ENCODE measurements at regions of chr3 and their contacts with region 1.

Region 1: DNA sequence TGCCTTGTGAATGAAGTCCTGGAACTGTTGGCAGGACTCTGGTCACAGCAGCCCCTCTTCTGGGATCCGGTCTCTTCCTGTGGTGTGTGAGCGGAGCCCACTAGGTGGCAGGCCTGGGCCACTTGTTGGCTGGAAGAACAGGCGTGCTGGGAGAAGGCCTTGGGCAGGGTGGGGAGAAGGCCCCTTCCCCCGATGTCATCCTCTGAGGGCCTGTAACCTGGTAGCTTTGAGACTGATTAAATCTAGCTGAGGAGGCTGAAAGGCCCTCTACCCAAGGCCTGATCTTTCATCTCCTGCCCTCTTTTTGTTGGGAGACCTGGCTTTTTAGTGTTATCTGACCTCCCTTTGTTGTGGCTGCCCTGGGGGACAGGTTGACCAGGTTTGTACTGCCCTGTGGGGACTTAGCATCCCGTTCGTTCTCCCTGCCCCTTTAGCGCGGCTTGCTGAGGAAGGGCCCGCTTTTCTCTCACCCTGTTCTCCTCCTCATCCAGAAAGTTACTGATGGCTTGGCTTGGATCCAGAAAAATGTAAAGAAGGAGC is 48.3 kb downstream of the CHCHD6 start:
- DNase-seq: peak; percentile 78
- ATAC-seq: peak; percentile 89
- H3K4me3 ChIP-seq: no peak overlapping the region
- H3K27ac ChIP-seq: peak overlapping the region; percentile 10; the same call in 1 of the 2 replicates
- H3K4me1 ChIP-seq: peaks cover 17% of the 10 kb centered on the region
- H3K27me3 ChIP-seq: no peaks in the 10 kb centered on the region
- CTCF ChIP-seq: peak; percentile 97
- POLR2A ChIP-seq: no peak
- RAD21 ChIP-seq: peak; percentile 98

Region 2: DNA sequence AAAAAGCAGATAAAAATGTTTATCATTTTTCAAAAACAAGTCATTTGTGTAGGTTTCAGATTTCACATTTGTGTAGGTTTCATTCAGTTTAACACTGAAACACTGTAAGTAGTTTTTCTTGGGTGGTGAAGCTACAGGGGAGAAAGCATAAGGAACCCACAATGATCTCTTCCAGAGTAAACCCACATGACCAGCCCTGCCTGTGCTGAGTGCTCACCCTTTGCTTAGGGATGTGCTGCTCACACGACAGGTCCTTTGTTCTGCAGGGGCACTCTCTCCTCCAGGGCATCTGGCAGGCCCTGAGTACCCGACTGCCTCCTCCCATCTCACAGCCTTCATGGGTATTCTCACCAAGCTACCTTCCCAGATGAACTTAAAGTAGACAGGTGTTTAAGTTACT is 305.6 kb before region 1 on chr3:
- CTCF ChIA-PET with region 1: no interaction called
- POLR2A ChIA-PET with region 1: no interaction called
- dilution Hi-C with region 1: no loop called
- in situ Hi-C with region 1: no loop called
- intact Hi-C with region 1: no loop called
- DNase-seq: peak; percentile 51
- ATAC-seq: peak; percentile 77
- H3K4me3 ChIP-seq: no peak overlapping the region
- H3K27ac ChIP-seq: no peak overlapping the region
- H3K4me1 ChIP-seq: peaks cover 9% of the 10 kb centered on the region
- H3K27me3 ChIP-seq: no peaks in the 10 kb centered on the region
- CTCF ChIP-seq: no peak
- POLR2A ChIP-seq: no peak
- RAD21 ChIP-seq: no peak

Region 3: DNA sequence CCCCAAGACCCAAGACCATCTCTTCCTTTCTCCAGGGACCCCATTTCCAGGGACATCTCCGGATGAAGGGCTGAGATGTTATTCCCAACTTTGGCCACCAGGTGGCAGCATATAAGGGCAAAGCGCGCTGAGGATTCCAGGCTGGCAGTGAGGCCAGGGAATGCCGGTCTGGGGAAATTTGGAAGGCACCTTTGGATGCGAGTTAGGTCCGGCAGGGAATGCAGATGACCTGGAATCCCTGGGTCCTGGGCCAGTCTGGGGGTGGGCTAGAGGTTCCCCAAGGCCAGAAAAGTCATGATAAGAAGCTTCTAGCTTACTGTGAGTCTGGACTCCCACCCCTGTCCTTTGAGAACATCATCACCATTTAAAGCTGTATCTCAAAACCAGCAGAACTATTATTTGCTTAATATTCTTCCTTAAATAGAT is 230.0 kb before region 1 on chr3:
- CTCF ChIA-PET with region 1: no interaction called
- POLR2A ChIA-PET with region 1: no interaction called
- dilution Hi-C with region 1: no loop called
- in situ Hi-C with region 1: no loop called
- intact Hi-C with region 1: loop called (anchors 5 kb)
- DNase-seq: peak; percentile 33
- ATAC-seq: peak; percentile 72
- H3K4me3 ChIP-seq: no peak overlapping the region
- H3K27ac ChIP-seq: no peak overlapping the region
- H3K4me1 ChIP-seq: no peaks in the 10 kb centered on the region; the same call in 1 of the 2 replicates
- H3K27me3 ChIP-seq: peaks cover 45% of the 10 kb centered on the region
- CTCF ChIP-seq: peak; percentile 78
- POLR2A ChIP-seq: no peak
- RAD21 ChIP-seq: peak; percentile 78

Region 4: DNA sequence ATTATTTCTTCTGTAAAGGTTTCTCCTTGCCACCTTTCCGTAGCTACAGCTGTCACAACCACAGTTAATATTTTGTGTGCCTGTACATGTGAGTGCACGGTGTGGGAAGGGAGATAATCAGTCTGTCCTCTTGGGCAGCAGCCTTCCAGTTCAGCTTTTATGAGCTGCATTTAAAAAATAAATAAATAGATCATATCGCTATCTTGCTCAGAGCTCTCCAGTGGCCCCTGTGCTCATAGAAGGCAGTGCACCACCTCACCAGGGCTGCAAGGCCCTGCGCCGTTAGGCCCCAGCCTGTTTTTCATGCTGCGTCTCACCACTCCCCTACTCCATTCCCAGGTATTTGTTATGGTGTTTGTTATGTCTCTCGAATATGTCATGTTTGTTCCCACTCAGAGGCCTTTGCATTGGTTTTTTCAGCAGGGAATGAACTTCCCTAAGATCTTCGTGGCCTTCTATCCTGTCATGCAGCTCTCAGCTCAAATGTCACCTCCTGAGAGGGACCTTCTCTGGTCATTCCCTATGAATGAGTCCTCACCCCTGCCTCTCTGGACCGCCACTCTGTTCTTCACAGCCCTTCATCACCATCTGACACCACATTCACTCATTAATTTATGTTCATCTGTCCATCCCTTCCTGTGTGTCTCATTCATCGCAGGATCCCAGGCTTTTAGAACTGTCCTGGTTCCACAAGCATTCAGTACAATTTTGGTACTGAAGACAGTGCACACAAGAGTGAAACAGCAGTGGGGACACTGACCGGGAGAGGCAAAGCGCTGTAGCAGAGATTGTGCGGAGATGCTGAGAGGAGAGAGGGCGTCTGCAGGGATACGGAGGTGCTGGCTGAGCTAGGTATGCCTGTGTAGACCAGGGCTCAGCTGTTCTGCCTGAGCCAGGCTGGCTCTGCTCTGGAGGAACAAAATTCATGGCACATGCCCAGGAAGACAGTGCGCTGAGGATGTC is 83.8 kb after region 1 on chr3:
- CTCF ChIA-PET with region 1: interaction called, 3 read pairs
- POLR2A ChIA-PET with region 1: no interaction called
- dilution Hi-C with region 1: no loop called
- in situ Hi-C with region 1: no loop called
- intact Hi-C with region 1: loop called (anchors 2 kb)
- DNase-seq: peak; percentile 51
- ATAC-seq: peak; percentile 91
- H3K4me3 ChIP-seq: no peak overlapping the region
- H3K27ac ChIP-seq: no peak overlapping the region
- H3K4me1 ChIP-seq: peaks cover 8% of the 10 kb centered on the region
- H3K27me3 ChIP-seq: no peaks in the 10 kb centered on the region
- CTCF ChIP-seq: peak; percentile 45
- POLR2A ChIP-seq: no peak
- RAD21 ChIP-seq: peak; percentile 50

Region 5: DNA sequence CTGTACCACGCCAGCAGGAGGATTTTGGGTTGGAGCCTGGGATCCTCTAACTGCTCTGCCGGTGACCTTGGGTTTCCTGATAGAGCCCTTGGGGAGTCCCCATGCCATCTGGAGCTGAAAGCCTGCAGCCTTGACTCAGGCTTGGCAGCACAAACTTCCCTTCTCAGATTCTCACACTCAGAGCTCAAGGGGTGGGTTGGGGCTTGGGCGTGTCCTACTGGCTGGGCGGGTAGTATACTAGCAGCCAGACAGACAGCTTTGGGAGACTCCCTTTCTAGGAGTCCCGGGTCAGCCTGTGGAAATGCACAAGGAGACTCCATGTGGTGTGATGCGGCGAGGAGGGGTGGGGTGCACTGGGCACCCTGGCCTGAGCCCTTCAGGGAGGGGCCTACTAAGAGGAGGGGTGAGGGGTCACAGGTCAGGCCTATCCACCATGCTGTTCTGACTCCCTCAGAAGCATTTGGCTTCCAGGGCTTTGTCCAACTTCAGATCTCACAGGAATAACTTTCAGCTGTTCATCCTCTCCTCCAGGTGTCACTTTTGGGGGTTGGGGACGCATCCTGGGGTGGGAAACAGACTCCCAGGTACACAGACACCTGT is 208.9 kb after region 1 on chr3:
- CTCF ChIA-PET with region 1: interaction called, 4 read pairs
- POLR2A ChIA-PET with region 1: no interaction called
- dilution Hi-C with region 1: no loop called
- in situ Hi-C with region 1: no loop called
- intact Hi-C with region 1: loop called (anchors 1 kb)
- DNase-seq: peak; percentile 61
- ATAC-seq: peak; percentile 57
- H3K4me3 ChIP-seq: no peak overlapping the region
- H3K27ac ChIP-seq: no peak overlapping the region
- H3K4me1 ChIP-seq: peaks cover 15% of the 10 kb centered on the region; the same call in 1 of the 2 replicates
- H3K27me3 ChIP-seq: no peaks in the 10 kb centered on the region
- CTCF ChIP-seq: no peak
- POLR2A ChIP-seq: no peak
- RAD21 ChIP-seq: no peak

Region 6: GRCh38 chr3:126971891-126972351 is 219.5 kb after region 1 on chr3:
- CTCF ChIA-PET with region 1: no interaction called
- POLR2A ChIA-PET with region 1: no interaction called
- dilution Hi-C with region 1: no loop called
- in situ Hi-C with region 1: no loop called
- intact Hi-C with region 1: no loop called
- DNase-seq: peak; percentile 61
- ATAC-seq: peak; percentile 76
- H3K4me3 ChIP-seq: no peak overlapping the region
- H3K27ac ChIP-seq: 0 out of 2 replicates have a peak overlapping the region, but pooled peaks have one; percentile 7
- H3K4me1 ChIP-seq: peaks cover 12% of the 10 kb centered on the region
- H3K27me3 ChIP-seq: no peaks in the 10 kb centered on the region; the same call in 1 of the 2 replicates
- CTCF ChIP-seq: no peak
- POLR2A ChIP-seq: no peak
- RAD21 ChIP-seq: no peak

Region 7: DNA sequence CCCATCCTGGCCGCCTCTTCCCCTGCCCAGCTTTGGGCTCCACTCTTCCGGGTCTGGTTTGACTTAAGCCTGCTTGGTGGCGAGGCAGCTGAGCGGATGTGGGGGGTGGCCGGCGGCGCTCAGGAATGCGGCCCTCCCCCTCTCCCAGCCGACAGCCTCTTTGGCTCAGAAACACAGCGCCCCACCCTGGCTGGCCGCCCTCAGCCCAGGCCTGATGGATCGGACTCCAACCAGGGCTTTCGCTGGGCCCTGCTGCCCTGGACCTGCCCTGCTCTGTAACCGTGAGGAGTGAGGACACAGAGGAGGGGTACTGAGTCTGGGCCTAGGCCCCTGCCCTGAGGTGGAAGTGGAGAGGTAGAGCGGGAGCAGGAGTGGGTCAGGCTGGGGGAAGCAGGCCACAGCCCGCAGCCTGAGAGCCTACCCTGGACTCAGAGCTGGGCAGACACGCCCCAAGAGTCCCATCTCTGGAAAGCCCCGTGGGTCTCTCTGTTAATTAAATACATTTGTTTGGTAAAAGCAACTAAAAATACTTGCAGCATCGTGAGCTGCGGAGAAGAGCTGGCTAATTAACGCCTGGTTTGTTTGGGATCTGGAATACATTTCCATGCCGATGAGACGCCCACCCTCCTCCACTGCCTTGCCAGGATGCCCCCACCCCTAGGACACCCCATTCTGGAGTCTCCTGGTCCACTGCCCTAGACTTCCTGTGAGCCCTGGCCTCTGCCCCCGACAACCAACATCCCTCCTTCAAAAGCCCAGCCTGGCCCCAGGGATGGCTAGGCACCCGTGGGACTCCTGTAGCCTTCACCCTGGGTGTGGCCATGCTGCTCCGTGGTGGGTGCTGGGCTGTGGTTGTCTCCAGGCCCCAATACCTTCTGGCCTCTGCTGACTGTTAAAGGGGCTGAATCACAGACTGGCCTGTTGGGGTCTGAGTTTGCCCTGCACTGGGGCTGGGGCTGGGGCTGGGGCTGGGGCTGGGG is 250.1 kb after region 1 on chr3:
- CTCF ChIA-PET with region 1: interaction called, 13 read pairs
- POLR2A ChIA-PET with region 1: no interaction called
- dilution Hi-C with region 1: no loop called
- in situ Hi-C with region 1: no loop called
- intact Hi-C with region 1: loop called (anchors 1 kb)
- DNase-seq: peak; percentile 89
- ATAC-seq: peak; percentile 92
- H3K4me3 ChIP-seq: no peak overlapping the region
- H3K27ac ChIP-seq: peak overlapping the region; percentile 99
- H3K4me1 ChIP-seq: peaks cover 29% of the 10 kb centered on the region
- H3K27me3 ChIP-seq: no peaks in the 10 kb centered on the region
- CTCF ChIP-seq: peak; percentile 69
- POLR2A ChIP-seq: 0 out of 2 replicates have a peak, but pooled peaks have one; percentile 49
- RAD21 ChIP-seq: peak; percentile 70

Region 8: GRCh38 chr3:127544192-127544802 is 791.9 kb after region 1 on chr3:
- CTCF ChIA-PET with region 1: interaction called, 3 read pairs
- POLR2A ChIA-PET with region 1: no interaction called
- dilution Hi-C with region 1: no loop called
- in situ Hi-C with region 1: no loop called
- intact Hi-C with region 1: loop called (anchors 1 kb)
- DNase-seq: peak; percentile 60
- ATAC-seq: peak; percentile 70
- H3K4me3 ChIP-seq: no peak overlapping the region
- H3K27ac ChIP-seq: no peak overlapping the region
- H3K4me1 ChIP-seq: no peaks in the 10 kb centered on the region; the same call in 1 of the 2 replicates
- H3K27me3 ChIP-seq: peaks cover 25% of the 10 kb centered on the region; the same call in 1 of the 2 replicates
- CTCF ChIP-seq: peak; percentile 69
- POLR2A ChIP-seq: no peak
- RAD21 ChIP-seq: peak; percentile 62